K562 (cell line): ENCODE measurements at regions of chr3 and their contacts with region 1.

Region 1: GRCh38 chr3:23805633-23806533 is at the start of gene UBE2E1:
- DNase-seq: peak; percentile 73 to 80 (median 80)
- ATAC-seq: peak; percentile 72
- H3K4me3 ChIP-seq: peak within 1 kb of the TSS; percentile 72
- H3K27ac ChIP-seq: peak within 1 kb of the TSS; percentile 79
- H3K4me1 ChIP-seq: peaks cover 24 to 27% of the 10 kb centered on the region in 2 experiments; a peak in 4 of 5 replicates
- H3K27me3 ChIP-seq: no peaks in the 10 kb centered on the region
- CTCF ChIP-seq: no peak
- EP300 ChIP-seq: no peak
- POLR2A ChIP-seq: peak; percentile 69
- RAD21 ChIP-seq: no peak
- polyA plus RNA-seq, gene UBE2E1: 54.4 to 63.8 TPM

Region 2: GRCh38 chr3:23202921-23203707 is 602.8 kb before region 1 on chr3 and contains the start of gene UBE2E2:
- CTCF ChIA-PET with region 1: no interaction called
- POLR2A ChIA-PET with region 1: no interaction called
- in situ Hi-C with region 1: no loop called
- intact Hi-C with region 1: loop called (anchors 10 kb)
- DNase-seq: peak; percentile 76 to 97 (median 92)
- ATAC-seq: peak; percentile 86
- H3K4me3 ChIP-seq: peak within 1 kb of the TSS; percentile 70
- H3K27ac ChIP-seq: no peak within 1 kb of the TSS
- H3K4me1 ChIP-seq: peaks cover 4 to 17% of the 10 kb centered on the region in 2 experiments; a peak in 2 of 5 replicates
- H3K27me3 ChIP-seq: peaks cover 3 to 6% of the 10 kb centered on the region in 2 experiments
- CTCF ChIP-seq: no peak
- EP300 ChIP-seq: no peak
- POLR2A ChIP-seq: no peak
- RAD21 ChIP-seq: no peak
- polyA plus RNA-seq, gene UBE2E2: 0.22 to 0.25 TPM

Region 3: GRCh38 chr3:23819599-23820360 is 13.9 kb after region 1 on chr3:
- CTCF ChIA-PET with region 1: no interaction called
- POLR2A ChIA-PET with region 1: interaction called, 10 read pairs
- in situ Hi-C with region 1: no loop called
- intact Hi-C with region 1: no loop called
- DNase-seq: no peak
- ATAC-seq: no peak
- H3K4me3 ChIP-seq: no peak overlapping the region
- H3K27ac ChIP-seq: no peak overlapping the region
- H3K4me1 ChIP-seq: peaks cover 8 to 28% of the 10 kb centered on the region in 2 experiments
- H3K27me3 ChIP-seq: no peaks in the 10 kb centered on the region
- CTCF ChIP-seq: no peak
- EP300 ChIP-seq: no peak
- POLR2A ChIP-seq: no peak
- RAD21 ChIP-seq: no peak

Region 4: GRCh38 chr3:23834082-23834870 is 28.4 kb after region 1 on chr3:
- CTCF ChIA-PET with region 1: no interaction called
- POLR2A ChIA-PET with region 1: interaction called, 11 read pairs
- in situ Hi-C with region 1: no loop called
- intact Hi-C with region 1: no loop called
- DNase-seq: no peak
- ATAC-seq: no peak
- H3K4me3 ChIP-seq: no peak overlapping the region
- H3K27ac ChIP-seq: no peak overlapping the region
- H3K4me1 ChIP-seq: peaks cover 0 to 3% of the 10 kb centered on the region in 2 experiments; a peak in 2 of 5 replicates
- H3K27me3 ChIP-seq: no peaks in the 10 kb centered on the region
- CTCF ChIP-seq: peak in 2 of 3 experiments; percentile 13 to 33; a peak in 2 of 6 replicates
- EP300 ChIP-seq: no peak
- POLR2A ChIP-seq: no peak
- RAD21 ChIP-seq: peak; percentile 31 to 44; a peak in 3 of 4 replicates

Region 5: DNA sequence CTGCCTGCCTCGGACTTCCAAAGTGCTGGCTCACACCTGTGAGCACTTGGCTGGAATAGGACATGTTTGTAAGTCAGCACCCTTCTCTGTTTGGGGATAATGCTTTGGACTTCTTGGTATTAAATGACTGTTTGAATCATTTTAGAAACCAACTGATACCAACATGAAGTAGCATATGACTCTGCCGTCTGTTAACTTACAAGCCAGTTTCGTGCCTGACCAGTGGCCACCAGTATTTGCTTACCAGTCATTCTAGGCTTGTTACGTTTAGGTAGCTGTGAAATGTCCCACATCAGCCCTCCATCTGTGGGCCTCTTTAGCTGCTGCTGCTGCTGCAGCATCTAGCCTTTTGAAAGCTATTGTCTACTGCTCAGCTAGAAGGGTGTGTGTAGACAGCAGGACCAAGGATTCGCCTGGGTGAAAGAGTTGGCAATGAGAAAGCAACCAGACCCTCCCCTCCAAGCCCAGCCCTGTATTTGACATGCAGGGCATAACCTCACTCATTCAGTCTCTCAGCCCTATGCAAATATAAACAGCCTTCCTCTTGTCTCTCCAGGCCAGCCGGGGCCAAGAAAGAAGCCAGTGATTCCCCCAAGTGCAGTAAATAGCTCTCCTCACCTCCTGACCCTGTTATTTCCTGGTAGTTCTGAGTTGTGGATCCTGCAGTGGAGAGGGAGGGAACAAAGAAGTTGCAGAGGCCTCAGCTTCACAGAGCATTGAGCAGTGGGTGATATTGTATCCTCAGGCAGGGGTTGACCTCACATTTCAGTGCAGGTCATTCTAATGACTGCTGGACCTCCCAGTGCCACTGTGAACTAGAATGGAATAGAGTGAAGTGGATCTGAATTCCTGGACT is 59.9 kb after region 1 on chr3:
- CTCF ChIA-PET with region 1: no interaction called
- POLR2A ChIA-PET with region 1: no interaction called
- in situ Hi-C with region 1: no loop called
- intact Hi-C with region 1: loop called (anchors 5 kb)
- DNase-seq: peak in 1 of 4 experiments; percentile 20
- ATAC-seq: peak; percentile 53
- H3K4me3 ChIP-seq: no peak overlapping the region
- H3K27ac ChIP-seq: no peak overlapping the region
- H3K4me1 ChIP-seq: no peaks in the 10 kb centered on the region; a peak in 1 of 5 replicates
- H3K27me3 ChIP-seq: no peaks in the 10 kb centered on the region
- CTCF ChIP-seq: no peak
- EP300 ChIP-seq: no peak
- POLR2A ChIP-seq: no peak
- RAD21 ChIP-seq: no peak

Region 6: GRCh38 chr3:23916886-23917678 is 111.2 kb after region 1 on chr3 and contains the starts of genes NKIRAS1 and RPL15:
- CTCF ChIA-PET with region 1: no interaction called
- POLR2A ChIA-PET with region 1: interaction called, 8 read pairs
- in situ Hi-C with region 1: no loop called
- intact Hi-C with region 1: loop called (anchors 2 kb)
- DNase-seq: peak; percentile 94 to 99 (median 96)
- ATAC-seq: peak; percentile 93
- H3K4me3 ChIP-seq: peak within 1 kb of the TSS; percentile 73
- H3K27ac ChIP-seq: peak within 1 kb of the TSS; percentile 91
- H3K4me1 ChIP-seq: peaks cover 6 to 19% of the 10 kb centered on the region in 2 experiments
- H3K27me3 ChIP-seq: no peaks in the 10 kb centered on the region
- CTCF ChIP-seq: peak; percentile 28 to 45 (median 37); a peak in 4 of 6 replicates
- EP300 ChIP-seq: peak; percentile 47
- POLR2A ChIP-seq: peak; percentile 100
- RAD21 ChIP-seq: no peak; a peak in 1 of 4 replicates
- polyA plus RNA-seq, gene NKIRAS1: 5.5 to 5.6 TPM
- polyA plus RNA-seq, gene RPL15: 7,800 to 8,850 TPM

Region 7: DNA sequence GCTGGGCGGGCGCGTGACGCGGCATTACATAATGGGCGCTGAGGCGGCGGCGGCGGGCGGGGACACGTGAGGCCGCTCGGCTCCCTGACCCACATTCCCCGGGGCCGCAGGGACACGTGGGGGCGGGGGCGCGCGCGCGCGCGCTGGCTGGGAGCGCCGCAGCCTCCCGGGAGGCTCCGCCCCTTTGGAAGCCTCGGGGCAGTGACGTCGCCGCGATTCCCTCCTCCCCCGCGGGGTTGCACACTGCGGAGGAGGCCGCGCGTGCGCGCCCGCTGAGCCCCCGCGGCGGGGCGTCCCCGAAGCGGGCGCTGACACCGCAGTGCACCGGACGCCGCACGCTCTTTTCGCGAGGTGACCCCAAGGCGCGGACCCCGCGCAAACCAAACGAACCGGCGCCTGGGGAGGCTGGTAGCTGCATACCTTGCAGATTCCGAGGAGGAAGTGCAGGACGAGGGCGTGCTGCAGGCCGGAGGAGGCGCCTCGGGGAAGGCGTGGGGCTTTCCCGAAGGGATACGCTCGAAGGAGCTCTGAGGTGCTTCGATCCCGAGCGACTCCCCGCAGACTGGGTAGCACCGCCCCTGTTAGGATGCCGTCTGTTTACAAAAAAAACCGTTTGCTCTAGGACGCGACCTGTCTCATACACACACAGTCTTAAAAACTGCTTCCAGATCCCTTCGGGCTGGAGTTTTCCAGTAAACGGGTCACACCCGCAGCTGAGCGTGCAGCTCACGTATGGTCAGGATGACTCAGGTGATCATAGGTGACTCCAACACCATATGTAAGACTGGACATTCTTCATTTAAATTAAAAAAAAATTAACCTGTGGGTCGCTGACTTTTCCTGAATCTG is 140.2 kb after region 1 on chr3:
- CTCF ChIA-PET with region 1: no interaction called
- POLR2A ChIA-PET with region 1: no interaction called
- in situ Hi-C with region 1: no loop called
- intact Hi-C with region 1: loop called (anchors 10 kb)
- DNase-seq: peak; percentile 99
- ATAC-seq: peak; percentile 84
- H3K4me3 ChIP-seq: peak overlapping the region; percentile 59
- H3K27ac ChIP-seq: peak overlapping the region; percentile 82
- H3K4me1 ChIP-seq: peaks cover 17 to 46% of the 10 kb centered on the region in 2 experiments
- H3K27me3 ChIP-seq: no peaks in the 10 kb centered on the region
- CTCF ChIP-seq: no peak
- EP300 ChIP-seq: no peak; the same call in 1 of the 2 replicates
- POLR2A ChIP-seq: peak; percentile 73
- RAD21 ChIP-seq: peak in 1 of 2 experiments; percentile 3; a peak in 2 of 4 replicates